Prostate gland (tissue), 2 donors: ENCODE measurements at regions of chr7 and their contacts with region 1.

Region 1: DNA sequence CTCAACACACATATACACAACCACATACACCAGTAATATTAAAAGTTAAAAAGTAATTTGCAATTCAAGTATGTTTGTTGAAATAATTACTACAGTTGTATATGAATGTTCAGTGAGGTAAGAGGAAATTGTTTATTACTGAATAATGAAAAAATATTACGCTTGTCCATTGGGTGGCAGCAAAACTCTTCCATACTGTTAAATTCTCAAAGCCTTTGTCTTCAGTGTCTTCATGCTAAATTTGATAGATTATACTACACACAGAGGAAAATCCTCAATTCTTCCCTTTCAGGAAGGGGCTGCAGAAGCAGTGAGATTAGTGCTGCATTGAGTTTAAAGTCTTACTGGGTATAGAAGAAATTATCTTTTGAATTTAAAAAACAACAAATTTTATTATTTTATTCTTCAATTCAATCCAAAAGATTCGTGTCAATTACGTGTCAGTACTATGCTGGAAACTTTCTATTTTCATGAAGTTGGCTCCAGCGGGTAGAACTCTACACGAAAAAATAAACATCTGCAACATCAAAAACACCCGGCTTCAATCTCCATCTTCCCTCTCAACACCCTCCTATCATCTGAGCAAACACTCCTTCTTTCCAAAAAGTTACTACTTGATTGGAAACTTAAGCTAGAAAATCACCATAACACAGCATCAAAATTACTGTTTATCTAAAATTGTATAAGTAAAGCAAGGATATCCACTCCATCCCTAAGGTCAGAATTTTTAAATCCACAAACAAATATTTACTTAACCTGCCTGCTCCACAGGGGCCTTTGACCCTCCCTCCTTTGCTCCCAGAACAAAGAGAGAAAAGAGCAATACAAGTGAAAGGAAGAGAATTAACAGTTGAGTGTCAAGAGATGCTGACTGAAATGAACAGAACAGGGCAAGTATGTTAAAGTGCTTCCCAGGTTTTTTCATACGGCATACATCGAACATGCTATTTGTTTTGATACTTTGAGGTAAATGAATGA is 37.0 kb upstream of the TES start:
- DNase-seq: peak; percentile 30
- H3K4me3 ChIP-seq: no peak overlapping the region
- H3K27ac ChIP-seq: no peak overlapping the region
- H3K4me1 ChIP-seq: no peaks in the 10 kb centered on the region
- H3K27me3 ChIP-seq: no peaks in the 10 kb centered on the region
- CTCF ChIP-seq: peak; percentile 17 to 80 (median 57)
- POLR2A ChIP-seq: no peak

Region 2: DNA sequence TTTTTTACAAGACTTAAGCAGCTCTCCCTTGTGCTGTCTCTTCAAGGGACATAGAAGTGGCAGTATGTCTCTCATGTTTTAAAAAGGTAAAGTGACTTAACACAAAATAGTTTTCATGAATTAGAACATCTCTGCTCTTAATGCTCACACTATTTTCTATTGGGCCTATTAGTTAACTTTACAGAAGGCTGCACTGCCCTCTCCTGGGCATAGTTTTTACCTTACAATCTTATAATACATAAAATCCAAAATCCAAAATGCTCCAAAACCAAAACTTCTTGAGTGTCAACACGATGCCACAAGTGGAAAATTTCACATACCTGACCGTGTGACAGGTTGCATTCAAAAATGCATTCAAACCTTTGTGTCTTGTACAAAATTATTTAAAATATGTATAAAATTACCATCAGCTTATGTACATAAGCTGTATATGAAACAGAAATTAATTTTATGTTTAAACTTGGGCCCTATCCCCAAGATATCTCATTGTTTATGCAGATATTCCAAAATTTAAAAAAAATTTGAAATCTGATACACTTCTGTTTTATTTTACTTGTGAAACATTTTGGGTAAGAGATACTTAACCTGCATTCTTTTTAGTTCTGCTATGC is 62.8 kb after region 1 on chr7:
- intact Hi-C with region 1: loop called (anchors 5 kb)
- DNase-seq: peak; percentile 52
- H3K4me3 ChIP-seq: no peak overlapping the region
- H3K27ac ChIP-seq: no peak overlapping the region
- H3K4me1 ChIP-seq: no peaks in the 10 kb centered on the region
- H3K27me3 ChIP-seq: no peaks in the 10 kb centered on the region
- CTCF ChIP-seq: peak in 3 of 4 experiments; percentile 65 to 72 (median 66)
- POLR2A ChIP-seq: no peak

Region 3: DNA sequence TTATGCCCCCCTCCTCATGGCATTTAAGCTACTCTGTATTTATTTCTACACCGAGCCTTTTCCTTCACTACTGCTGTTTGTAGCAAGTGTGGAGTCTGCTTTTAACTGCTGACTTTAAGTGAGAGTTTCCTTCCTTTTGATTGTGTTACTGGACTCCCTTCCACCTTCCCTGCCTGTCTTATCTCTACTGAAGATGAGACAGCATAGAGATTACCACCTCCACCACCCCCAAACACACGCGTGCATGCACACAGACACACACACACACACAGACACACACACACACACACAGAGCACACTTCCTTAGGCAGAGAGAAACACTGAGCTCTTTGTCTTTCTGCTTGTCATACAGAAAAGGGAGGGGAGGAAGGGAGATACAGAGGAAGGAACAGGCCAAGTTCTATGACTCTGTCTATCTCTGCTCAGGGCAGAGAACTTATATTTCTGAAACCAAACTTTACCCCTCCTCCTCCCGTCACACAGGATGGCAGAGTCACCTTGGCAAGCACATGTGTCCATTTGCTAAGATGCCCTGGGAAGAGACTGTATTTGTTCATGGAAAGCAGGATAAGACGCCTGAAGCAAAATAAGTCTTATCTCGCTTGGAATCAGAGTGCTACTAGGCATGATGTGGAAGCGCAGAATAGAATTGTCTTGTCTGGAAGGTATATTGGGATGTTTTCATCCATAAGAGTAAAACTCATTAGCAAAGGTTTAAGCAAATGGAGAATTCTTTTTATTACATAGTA is 244.4 kb after region 1 on chr7:
- intact Hi-C with region 1: no loop called
- DNase-seq: no peak
- H3K4me3 ChIP-seq: no peak overlapping the region
- H3K27ac ChIP-seq: no peak overlapping the region
- H3K4me1 ChIP-seq: no peaks in the 10 kb centered on the region
- H3K27me3 ChIP-seq: no peaks in the 10 kb centered on the region
- CTCF ChIP-seq: no peak
- POLR2A ChIP-seq: no peak